Activated T-helper 2 cell treated with anti-CD3 and anti-CD28 coated beads, Interferon-gamma antibody, Interleukin-2, Interleukin-4, amounts not matched to agents 10 μg/mL and 5 μg/mL and 100 μg/mL, durations not matched to agents 14 hours and 24 hours and 36 hours (primary cell): ENCODE measurements at regions of chr2 and their contacts with region 1.

Region 1: GRCh38 chr2:3518496-3519254 is 656 bp downstream of the ADI1 start:
- DNase-seq: peak; percentile 98
- H3K4me3 Mint-ChIP-seq: peak overlapping the region; percentile 91
- H3K27ac Mint-ChIP-seq: peak overlapping the region; percentile 78
- H3K4me1 Mint-ChIP-seq: peaks cover 31% of the 10 kb centered on the region
- H3K27me3 Mint-ChIP-seq: no peaks in the 10 kb centered on the region

Region 2: GRCh38 chr2:3575534-3576262 is 57.0 kb after region 1 on chr2:
- intact Hi-C with region 1: loop called (anchors 1 kb)
- DNase-seq: peak; percentile 27
- H3K4me3 Mint-ChIP-seq: peak overlapping the region; percentile 93
- H3K27ac Mint-ChIP-seq: peak overlapping the region; percentile 90
- H3K4me1 Mint-ChIP-seq: peaks cover 34% of the 10 kb centered on the region
- H3K27me3 Mint-ChIP-seq: no peaks in the 10 kb centered on the region

Region 3: GRCh38 chr2:3587432-3587831 is 68.8 kb after region 1 on chr2:
- intact Hi-C with region 1: no loop called
- DNase-seq: no peak
- H3K4me3 Mint-ChIP-seq: no peak overlapping the region
- H3K27ac Mint-ChIP-seq: no peak overlapping the region
- H3K4me1 Mint-ChIP-seq: peaks cover 5% of the 10 kb centered on the region
- H3K27me3 Mint-ChIP-seq: no peaks in the 10 kb centered on the region